ENCODE measurements at regions of chr6 and their contacts with region 1.

Region 1: GRCh38 chr6:7107578-7108195 is at the start of gene RREB1:
- DNase-seq: peak; percentile 37 to 68 (median 60)
- ATAC-seq: peak; percentile 70
- H3K4me3 ChIP-seq: peak within 1 kb of the TSS; percentile 90
- H3K4me3 Mint-ChIP-seq: peak within 1 kb of the TSS; percentile 84 to 97 (median 95)
- H3K27ac ChIP-seq: peak within 1 kb of the TSS; percentile 82
- H3K27ac Mint-ChIP-seq: peak within 1 kb of the TSS; percentile 88 to 98 (median 95)
- H3K4me1 ChIP-seq: peaks cover 13 to 24% of the 10 kb centered on the region in 2 donors
- H3K4me1 Mint-ChIP-seq: peaks cover 26 to 41% (median 38%) of the 10 kb centered on the region in 7 donors
- H3K27me3 ChIP-seq: no peaks in the 10 kb centered on the region
- H3K27me3 Mint-ChIP-seq: peaks cover 0 to 7% (median 0%) of the 10 kb centered on the region in 5 donors
- total RNA-seq, gene RREB1: 28.3 to 56.7 (median 51.6) TPM

Region 2: GRCh38 chr6:6319952-6320811 is 787.5 kb before region 1 on chr6 and contains the start of gene F13A1:
- CTCF ChIA-PET with region 1: no interaction called
- POLR2A ChIA-PET with region 1: no interaction called
- intact Hi-C with region 1: no loop called
- DNase-seq: no peak
- ATAC-seq: peak; percentile 36
- H3K4me3 ChIP-seq: no peak within 1 kb of the TSS
- H3K4me3 Mint-ChIP-seq: no peak within 1 kb of the TSS
- H3K27ac ChIP-seq: no peak within 1 kb of the TSS
- H3K27ac Mint-ChIP-seq: no peak within 1 kb of the TSS
- H3K4me1 ChIP-seq: no peaks in the 10 kb centered on the region
- H3K4me1 Mint-ChIP-seq: peaks cover 0 to 5% (median 0%) of the 10 kb centered on the region in 7 donors
- H3K27me3 ChIP-seq: peaks cover 0 to 3% of the 10 kb centered on the region in 2 donors
- H3K27me3 Mint-ChIP-seq: peaks cover 54 to 63% (median 62%) of the 10 kb centered on the region in 5 donors
- total RNA-seq, gene F13A1: 1.9 to 42.2 (median 4.8) TPM in 4 of 5 experiments, not detected in the other

Region 3: DNA sequence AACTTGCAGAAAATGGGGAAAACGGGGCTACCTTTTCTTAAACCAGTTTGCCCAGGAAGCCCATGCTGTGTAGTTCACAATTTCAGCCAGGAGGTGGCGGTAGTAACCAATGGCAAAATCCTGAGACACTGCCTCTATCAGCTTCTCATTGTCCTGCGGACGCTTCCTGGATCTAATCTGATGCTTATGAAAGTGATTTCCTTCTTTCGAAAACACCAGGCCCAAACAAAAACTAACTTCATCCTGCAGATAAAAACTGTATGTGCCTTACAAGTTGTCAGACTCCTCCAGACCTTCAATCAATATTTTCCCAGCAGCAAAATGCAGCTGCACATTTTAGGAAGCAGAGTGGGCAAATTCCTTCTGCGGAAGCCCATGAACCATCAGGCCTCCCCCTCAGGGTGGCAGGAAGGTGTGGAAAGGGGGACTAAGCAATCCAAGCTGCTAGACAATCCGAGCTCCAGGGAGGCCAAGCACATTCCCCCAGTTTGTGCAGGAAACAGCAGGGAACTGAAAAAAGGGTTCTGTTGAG is 430.7 kb before region 1 on chr6:
- CTCF ChIA-PET with region 1: no interaction called
- POLR2A ChIA-PET with region 1: no interaction called
- intact Hi-C with region 1: loop called (anchors 2 to 10 kb)
- DNase-seq: peak; percentile 57 to 88 (median 77)
- ATAC-seq: peak; percentile 93
- H3K4me3 ChIP-seq: no peak overlapping the region
- H3K4me3 Mint-ChIP-seq: peak overlapping the region in 8 of 10 donors; percentile 0 to 73 (median 43)
- H3K27ac ChIP-seq: no peak overlapping the region
- H3K27ac Mint-ChIP-seq: peak overlapping the region in 6 of 9 donors; percentile 28 to 95 (median 80)
- H3K4me1 ChIP-seq: peaks cover 0 to 6% of the 10 kb centered on the region in 2 donors
- H3K4me1 Mint-ChIP-seq: peaks cover 4 to 41% (median 11%) of the 10 kb centered on the region in 7 donors
- H3K27me3 ChIP-seq: no peaks in the 10 kb centered on the region
- H3K27me3 Mint-ChIP-seq: peaks cover 0 to 5% (median 0%) of the 10 kb centered on the region in 5 donors

Region 4: DNA sequence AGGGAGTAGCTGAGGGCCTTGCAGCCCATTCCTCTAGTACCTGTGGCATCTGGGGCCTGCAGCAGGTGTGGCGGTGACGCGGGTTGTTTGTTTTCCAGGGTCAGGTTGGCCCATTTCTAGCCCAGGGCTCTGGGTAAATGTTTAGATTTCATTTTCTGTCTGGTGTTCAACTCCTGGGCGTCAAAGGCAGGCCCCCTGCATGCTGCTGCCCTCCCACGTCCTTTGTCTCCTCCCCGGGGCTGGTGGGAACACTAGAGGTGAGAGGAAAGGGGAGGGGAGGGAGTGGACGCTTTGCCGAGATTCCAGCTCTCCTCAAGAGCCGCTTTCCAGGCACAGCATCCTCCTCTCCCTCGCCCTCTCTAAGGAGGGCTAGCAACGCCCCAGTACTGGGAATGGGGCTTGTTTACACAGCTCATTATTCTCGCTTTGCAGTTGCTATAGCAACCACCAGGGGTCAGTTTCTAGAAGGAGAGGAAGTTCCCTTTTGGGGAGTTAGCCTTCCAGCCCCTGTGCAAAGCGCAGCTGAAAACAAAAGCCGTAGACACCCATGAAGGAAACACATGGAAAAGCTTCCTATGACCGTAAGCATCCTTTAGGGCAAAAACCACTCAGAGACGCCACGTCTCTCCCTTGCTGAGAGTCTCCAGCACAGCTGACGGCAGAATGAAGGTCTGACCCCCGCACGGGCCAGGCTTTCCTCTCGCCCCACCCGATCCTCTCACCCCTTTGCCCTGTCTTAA is 348.6 kb before region 1 on chr6:
- CTCF ChIA-PET with region 1: no interaction called
- POLR2A ChIA-PET with region 1: no interaction called
- intact Hi-C with region 1: loop called in 1 of 2 experiments (anchors 10 kb)
- DNase-seq: peak in 6 of 9 donors; percentile 8 to 30 (median 25)
- ATAC-seq: peak; percentile 78
- H3K4me3 ChIP-seq: no peak overlapping the region
- H3K4me3 Mint-ChIP-seq: no peak overlapping the region
- H3K27ac ChIP-seq: no peak overlapping the region
- H3K27ac Mint-ChIP-seq: no peak overlapping the region
- H3K4me1 ChIP-seq: no peaks in the 10 kb centered on the region
- H3K4me1 Mint-ChIP-seq: peaks cover 0 to 6% (median 0%) of the 10 kb centered on the region in 7 donors
- H3K27me3 ChIP-seq: no peaks in the 10 kb centered on the region
- H3K27me3 Mint-ChIP-seq: peaks cover 0 to 21% (median 0%) of the 10 kb centered on the region in 5 donors

Region 5: DNA sequence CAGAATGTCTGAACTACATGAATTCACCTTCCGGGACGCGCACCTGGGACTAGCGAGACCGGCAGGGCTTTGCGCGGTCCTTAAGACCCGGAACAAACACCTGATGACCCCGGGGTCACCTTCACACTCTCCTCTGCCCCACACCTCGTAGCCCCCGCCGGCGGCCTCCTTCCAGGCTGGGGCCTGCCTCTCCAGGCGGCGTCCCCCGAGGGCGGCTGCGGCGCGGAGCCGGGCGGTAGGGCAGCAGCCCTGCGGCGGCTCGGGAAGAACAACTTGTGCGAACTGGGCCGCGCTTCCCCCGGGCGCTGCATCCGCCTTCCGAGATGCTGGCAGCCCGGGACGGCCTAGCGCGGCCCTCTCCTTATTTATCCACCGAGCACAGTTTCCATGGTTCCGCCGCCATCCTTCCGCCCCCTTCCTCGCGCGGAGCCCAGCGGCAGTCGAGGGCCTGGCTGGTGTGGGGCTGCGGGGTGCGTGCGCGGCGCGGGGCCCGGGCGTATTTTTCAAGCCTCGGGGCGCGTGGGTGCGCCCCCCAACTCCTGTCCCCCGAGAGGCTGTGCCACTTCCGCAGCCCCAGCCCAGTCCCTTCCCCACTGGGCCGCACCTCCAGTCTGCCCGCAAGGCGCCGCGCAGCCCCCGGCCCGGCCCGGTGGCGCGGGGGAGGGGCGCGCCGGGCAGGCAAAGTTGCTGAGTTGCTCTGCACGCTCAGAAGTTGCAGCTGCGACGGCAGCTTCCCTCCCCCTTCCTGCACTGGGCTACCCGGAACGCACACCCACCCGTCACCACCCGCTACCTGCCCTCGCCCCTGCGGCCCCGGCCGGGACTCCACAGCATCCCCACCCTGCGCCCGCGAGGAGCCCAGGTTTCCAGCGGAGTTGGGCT is 56.2 kb before region 1 on chr6:
- CTCF ChIA-PET with region 1: no interaction called
- POLR2A ChIA-PET with region 1: interaction called, 17 read pairs
- intact Hi-C with region 1: loop called in 1 of 2 experiments (anchors 1 kb)
- DNase-seq: peak; percentile 34 to 81 (median 70)
- ATAC-seq: peak; percentile 83
- H3K4me3 ChIP-seq: peak overlapping the region; percentile 77
- H3K4me3 Mint-ChIP-seq: peak overlapping the region; percentile 20 to 89 (median 79)
- H3K27ac ChIP-seq: peak overlapping the region; percentile 59
- H3K27ac Mint-ChIP-seq: peak overlapping the region in 6 of 9 donors; percentile 69 to 86 (median 79)
- H3K4me1 ChIP-seq: peaks cover 0 to 4% of the 10 kb centered on the region in 2 donors
- H3K4me1 Mint-ChIP-seq: peaks cover 5 to 18% (median 11%) of the 10 kb centered on the region in 7 donors
- H3K27me3 ChIP-seq: no peaks in the 10 kb centered on the region
- H3K27me3 Mint-ChIP-seq: peaks cover 0 to 66% (median 0%) of the 10 kb centered on the region in 5 donors

Region 6: DNA sequence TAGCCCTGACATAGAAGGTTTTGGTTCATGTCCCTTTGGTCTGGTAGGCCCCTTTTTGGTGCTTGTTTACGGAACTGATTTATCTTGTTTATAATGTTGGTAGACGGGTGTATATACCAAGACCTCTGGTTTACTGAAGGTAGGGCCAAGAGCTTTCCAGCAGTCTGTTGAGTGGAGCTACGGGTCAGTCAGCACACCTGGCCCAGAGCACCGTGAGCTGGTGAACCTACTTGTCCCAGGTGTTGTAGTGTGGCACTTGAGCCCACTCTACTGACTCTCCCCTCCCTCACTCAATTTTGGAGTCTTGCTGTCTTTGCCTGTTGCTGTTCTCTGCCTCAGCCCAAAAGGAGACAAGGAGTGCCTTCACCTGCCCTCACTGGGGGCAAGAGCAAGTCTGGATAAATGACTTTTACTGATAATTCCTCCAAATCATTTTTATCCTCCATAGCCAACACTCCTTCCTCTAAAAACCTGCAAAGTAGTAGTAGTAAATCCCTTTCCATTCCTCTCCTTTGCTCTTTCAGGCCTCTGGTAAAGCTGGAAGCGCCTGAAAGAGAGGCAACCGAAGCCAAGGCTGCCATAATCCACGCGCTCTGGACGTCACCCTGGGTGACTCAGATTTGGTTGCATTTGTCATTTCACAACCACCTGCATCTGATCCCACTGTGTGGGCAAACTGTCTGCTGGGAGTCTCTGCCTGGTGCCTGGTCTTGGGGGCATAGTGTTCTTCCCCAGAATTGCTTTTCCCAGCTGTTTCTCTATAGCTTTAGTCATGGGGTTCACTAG is 22.3 kb after region 1 on chr6:
- CTCF ChIA-PET with region 1: interaction called, 8 read pairs
- POLR2A ChIA-PET with region 1: interaction called, 99 read pairs
- intact Hi-C with region 1: loop called in 1 of 2 experiments (anchors 1 kb)
- DNase-seq: no peak
- ATAC-seq: peak; percentile 71
- H3K4me3 ChIP-seq: no peak overlapping the region
- H3K4me3 Mint-ChIP-seq: peak overlapping the region in 9 of 10 donors; percentile 50 to 73 (median 68)
- H3K27ac ChIP-seq: peak overlapping the region; percentile 52
- H3K27ac Mint-ChIP-seq: peak overlapping the region; percentile 51 to 94 (median 90)
- H3K4me1 ChIP-seq: peaks cover 7 to 45% of the 10 kb centered on the region in 2 donors
- H3K4me1 Mint-ChIP-seq: peaks cover 65 to 96% (median 89%) of the 10 kb centered on the region in 7 donors
- H3K27me3 ChIP-seq: no peaks in the 10 kb centered on the region
- H3K27me3 Mint-ChIP-seq: no peaks in the 10 kb centered on the region

Region 7: GRCh38 chr6:7196019-7196402 is 88.3 kb after region 1 on chr6:
- CTCF ChIA-PET with region 1: no interaction called
- POLR2A ChIA-PET with region 1: no interaction called
- intact Hi-C with region 1: loop called in 1 of 2 experiments (anchors 5 kb)
- DNase-seq: peak in 7 of 9 donors; percentile 12 to 49 (median 34)
- ATAC-seq: peak; percentile 57
- H3K4me3 ChIP-seq: no peak overlapping the region
- H3K4me3 Mint-ChIP-seq: peak overlapping the region; percentile 29 to 84 (median 72)
- H3K27ac ChIP-seq: peak overlapping the region; percentile 30
- H3K27ac Mint-ChIP-seq: peak overlapping the region in 8 of 9 donors; percentile 62 to 95 (median 91)
- H3K4me1 ChIP-seq: peaks cover 0 to 22% of the 10 kb centered on the region in 2 donors
- H3K4me1 Mint-ChIP-seq: peaks cover 23 to 71% (median 48%) of the 10 kb centered on the region in 7 donors
- H3K27me3 ChIP-seq: no peaks in the 10 kb centered on the region
- H3K27me3 Mint-ChIP-seq: no peaks in the 10 kb centered on the region

Region 8: GRCh38 chr6:8731874-8732273 is 1624.2 kb after region 1 on chr6:
- CTCF ChIA-PET with region 1: no interaction called
- POLR2A ChIA-PET with region 1: no interaction called
- intact Hi-C with region 1: no loop called
- DNase-seq: no peak
- ATAC-seq: no peak
- H3K4me3 ChIP-seq: no peak overlapping the region
- H3K4me3 Mint-ChIP-seq: no peak overlapping the region
- H3K27ac ChIP-seq: no peak overlapping the region
- H3K27ac Mint-ChIP-seq: no peak overlapping the region
- H3K4me1 ChIP-seq: no peaks in the 10 kb centered on the region
- H3K4me1 Mint-ChIP-seq: peaks cover 0 to 9% (median 0%) of the 10 kb centered on the region in 7 donors
- H3K27me3 ChIP-seq: no peaks in the 10 kb centered on the region
- H3K27me3 Mint-ChIP-seq: peaks cover 0 to 12% (median 0%) of the 10 kb centered on the region in 5 donors

Measured in naive thymus-derived CD4-positive, alpha-beta T cell (primary cell).